ENCODE measurements at regions of chr11 and their contacts with region 1.

Region 1: GRCh38 chr11:27698872-27699474 is 1.3 kb downstream of the BDNF start:
- DNase-seq: peak; percentile 82
- ATAC-seq: peak; percentile 70
- H3K4me3 ChIP-seq: peak overlapping the region; percentile 69 to 86
- H3K27ac ChIP-seq: peak overlapping the region; percentile 86
- H3K4me1 ChIP-seq: peaks cover 44 to 58% of the 10 kb centered on the region in 2 experiments
- H3K27me3 ChIP-seq: no peaks in the 10 kb centered on the region
- CTCF ChIP-seq: peak; percentile 54 to 80 (median 78); a peak in 5 of 6 replicates
- POLR2A ChIP-seq: no peak
- RAD21 ChIP-seq: peak; percentile 79

Region 2: GRCh38 chr11:28107748-28108618 is 409.0 kb after region 1 on chr11 and contains the starts of genes KIF18A and METTL15:
- CTCF ChIA-PET with region 1: interaction called, 3 read pairs
- POLR2A ChIA-PET with region 1: interaction called, 6 read pairs
- RAD21 ChIA-PET with region 1: interaction called in 1 of 2 experiments, 3 read pairs
- intact Hi-C with region 1: loop called (anchors 1 kb)
- DNase-seq: peak; percentile 97
- ATAC-seq: peak; percentile 89
- H3K4me3 ChIP-seq: peak within 1 kb of the TSS; percentile 78 to 81
- H3K27ac ChIP-seq: peak within 1 kb of the TSS; percentile 73
- H3K4me1 ChIP-seq: peaks cover 23 to 34% of the 10 kb centered on the region in 2 experiments; a peak in 3 of 4 replicates
- H3K27me3 ChIP-seq: no peaks in the 10 kb centered on the region
- CTCF ChIP-seq: no peak
- POLR2A ChIP-seq: peak; percentile 75
- RAD21 ChIP-seq: peak; percentile 4; the same call in 1 of the 2 replicates
- total RNA-seq, gene KIF18A: 50.7 TPM
- total RNA-seq, gene METTL15: 25.3 TPM

Region 3: DNA sequence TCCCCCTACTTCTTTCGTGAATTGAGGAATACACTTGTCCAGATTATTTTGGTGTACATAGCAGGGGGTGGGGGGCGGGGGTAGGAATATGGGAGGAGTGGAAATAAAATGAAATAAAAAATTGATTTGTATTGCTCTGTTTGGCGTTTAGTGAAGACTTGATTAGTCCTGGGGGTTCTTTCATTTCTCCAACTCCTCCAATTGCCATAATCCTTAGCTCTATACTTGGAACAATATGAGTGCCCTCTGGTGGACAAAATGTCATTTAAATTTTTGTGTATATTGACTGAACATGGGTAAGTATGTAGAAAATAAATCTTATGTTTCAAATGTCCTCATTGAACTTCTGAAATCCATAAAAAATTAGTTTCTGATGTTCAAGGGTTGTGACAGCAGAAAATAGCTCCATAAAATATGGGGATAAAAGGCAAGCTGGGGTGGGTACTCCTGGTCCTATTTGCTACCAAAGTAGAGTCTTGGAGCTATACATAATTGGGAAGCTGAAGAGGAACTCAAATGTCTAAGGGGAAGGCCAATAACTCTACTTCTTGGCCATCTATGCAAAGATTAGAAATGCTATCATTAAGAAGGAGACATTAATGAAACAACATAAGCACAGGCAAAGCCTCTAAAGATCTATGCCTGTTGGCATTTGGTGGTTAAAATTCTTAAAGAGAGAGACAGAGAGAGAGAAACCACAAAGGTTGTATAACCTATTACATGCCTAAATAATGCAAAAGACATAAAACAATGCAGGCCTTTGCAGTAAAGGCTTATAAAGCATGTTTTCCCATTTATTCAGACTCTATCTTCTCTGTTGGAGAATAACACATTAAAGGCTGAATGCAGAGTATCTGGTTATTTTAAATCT is 830.8 kb after region 1 on chr11:
- CTCF ChIA-PET with region 1: interaction called, 69 read pairs
- POLR2A ChIA-PET with region 1: interaction called, 5 read pairs
- RAD21 ChIA-PET with region 1: interaction called, 7 to 12 read pairs
- intact Hi-C with region 1: loop called (anchors 1 kb)
- DNase-seq: peak; percentile 37
- ATAC-seq: peak; percentile 81
- H3K4me3 ChIP-seq: no peak overlapping the region
- H3K27ac ChIP-seq: no peak overlapping the region
- H3K4me1 ChIP-seq: no peaks in the 10 kb centered on the region
- H3K27me3 ChIP-seq: no peaks in the 10 kb centered on the region
- CTCF ChIP-seq: peak; percentile 33 to 65 (median 50); a peak in 5 of 6 replicates
- POLR2A ChIP-seq: no peak
- RAD21 ChIP-seq: peak; percentile 77

Region 4: GRCh38 chr11:28697920-28698827 is 999.2 kb after region 1 on chr11:
- CTCF ChIA-PET with region 1: interaction called, 13 read pairs
- POLR2A ChIA-PET with region 1: interaction called, 3 read pairs
- RAD21 ChIA-PET with region 1: interaction called in 1 of 2 experiments, 5 read pairs
- intact Hi-C with region 1: loop called (anchors 1 kb)
- DNase-seq: peak; percentile 46
- ATAC-seq: peak; percentile 67
- H3K4me3 ChIP-seq: no peak overlapping the region
- H3K27ac ChIP-seq: no peak overlapping the region
- H3K4me1 ChIP-seq: peaks cover 17 to 21% of the 10 kb centered on the region in 2 experiments
- H3K27me3 ChIP-seq: no peaks in the 10 kb centered on the region
- CTCF ChIP-seq: peak; percentile 71 to 92 (median 85); a peak in 5 of 6 replicates
- POLR2A ChIP-seq: no peak
- RAD21 ChIP-seq: peak; percentile 85

Region 5: DNA sequence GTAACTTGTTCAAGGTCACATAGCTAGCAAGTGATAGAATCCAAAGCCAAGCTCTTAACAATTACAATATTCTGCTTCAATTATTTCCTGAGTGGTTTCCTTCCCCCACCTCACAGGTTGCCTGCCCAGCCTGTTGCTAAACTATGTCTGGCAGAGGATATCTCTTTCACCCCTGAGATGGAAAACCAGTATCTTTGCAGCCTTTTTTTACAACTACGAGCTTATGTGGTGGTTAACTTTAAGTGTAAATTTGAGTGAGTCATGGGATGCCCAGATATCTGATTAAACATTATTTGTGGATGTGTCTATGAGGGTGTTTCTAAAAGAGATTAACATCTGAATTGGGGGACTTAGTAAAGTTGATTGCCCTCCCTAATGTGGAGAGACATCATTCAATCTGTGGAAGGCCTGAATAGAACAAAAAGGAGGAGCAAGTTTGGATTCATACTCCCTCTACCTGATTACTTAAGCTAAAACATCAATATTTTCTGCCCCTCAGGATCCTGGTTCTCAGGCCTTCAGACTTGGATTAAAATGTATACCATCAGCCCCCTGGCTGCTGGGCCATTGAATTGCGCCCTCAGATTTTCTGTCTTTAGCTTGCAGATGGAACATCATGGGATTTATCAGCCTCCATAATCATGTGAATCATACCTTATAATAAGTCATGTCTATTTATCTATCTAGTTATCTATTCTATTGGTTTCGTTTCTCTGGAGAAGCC is 1321.1 kb after region 1 on chr11:
- CTCF ChIA-PET with region 1: interaction called, 22 read pairs
- POLR2A ChIA-PET with region 1: no interaction called
- RAD21 ChIA-PET with region 1: interaction called in 1 of 2 experiments, 3 read pairs
- intact Hi-C with region 1: loop called (anchors 5 kb)
- DNase-seq: peak; percentile 29
- ATAC-seq: peak; percentile 83
- H3K4me3 ChIP-seq: no peak overlapping the region
- H3K27ac ChIP-seq: no peak overlapping the region
- H3K4me1 ChIP-seq: peaks cover 0 to 3% of the 10 kb centered on the region in 2 experiments; a peak in 1 of 4 replicates
- H3K27me3 ChIP-seq: no peaks in the 10 kb centered on the region
- CTCF ChIP-seq: peak; percentile 54 to 75 (median 73); a peak in 5 of 6 replicates
- POLR2A ChIP-seq: no peak
- RAD21 ChIP-seq: peak; percentile 71

Region 6: GRCh38 chr11:29328961-29329441 is 1630.0 kb after region 1 on chr11:
- CTCF ChIA-PET with region 1: interaction called, 53 read pairs
- POLR2A ChIA-PET with region 1: no interaction called
- RAD21 ChIA-PET with region 1: interaction called, 10 to 11 read pairs
- intact Hi-C with region 1: loop called (anchors 1 kb)
- DNase-seq: peak; percentile 62
- ATAC-seq: peak; percentile 86
- H3K4me3 ChIP-seq: no peak overlapping the region
- H3K27ac ChIP-seq: no peak overlapping the region
- H3K4me1 ChIP-seq: peaks cover 0 to 7% of the 10 kb centered on the region in 2 experiments; a peak in 1 of 4 replicates
- H3K27me3 ChIP-seq: no peaks in the 10 kb centered on the region
- CTCF ChIP-seq: peak; percentile 74 to 81 (median 81)
- POLR2A ChIP-seq: no peak
- RAD21 ChIP-seq: peak; percentile 89

Region 7: DNA sequence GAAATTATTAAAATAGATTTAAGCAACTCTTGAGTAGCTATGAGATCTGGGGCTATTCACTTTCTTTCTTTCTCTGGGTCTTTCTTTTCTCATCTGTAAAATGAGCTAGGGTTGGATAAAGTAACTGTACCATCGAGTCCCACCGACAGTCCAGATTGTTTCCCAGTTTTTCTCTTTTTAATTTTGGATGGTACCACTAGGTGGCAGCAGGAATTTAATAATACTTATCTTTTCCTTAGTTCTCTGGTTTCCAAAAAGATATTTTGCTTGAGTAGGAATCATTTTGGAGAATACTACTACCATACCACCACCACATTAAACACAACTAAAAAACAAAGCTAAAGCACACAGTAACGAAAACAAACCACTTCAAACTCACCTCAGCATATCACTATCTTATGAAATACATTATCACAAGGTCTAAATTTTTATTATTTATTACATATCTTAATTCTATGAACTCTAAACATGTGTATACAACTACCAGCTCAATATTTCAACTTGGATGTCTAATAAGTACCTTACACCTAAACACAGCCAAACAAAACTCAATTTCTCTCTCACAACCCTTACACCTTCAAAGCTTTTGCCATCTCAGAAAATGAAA is 1733.8 kb after region 1 on chr11:
- CTCF ChIA-PET with region 1: no interaction called
- POLR2A ChIA-PET with region 1: no interaction called
- RAD21 ChIA-PET with region 1: no interaction called
- intact Hi-C with region 1: loop called (anchors 10 kb)
- DNase-seq: peak; percentile 3
- ATAC-seq: peak; percentile 46; the same call in 1 of the 2 replicates
- H3K4me3 ChIP-seq: no peak overlapping the region
- H3K27ac ChIP-seq: no peak overlapping the region
- H3K4me1 ChIP-seq: no peaks in the 10 kb centered on the region
- H3K27me3 ChIP-seq: no peaks in the 10 kb centered on the region
- CTCF ChIP-seq: peak; percentile 21 to 62 (median 30); a peak in 3 of 6 replicates
- POLR2A ChIP-seq: no peak
- RAD21 ChIP-seq: peak; percentile 49; the same call in 1 of the 2 replicates